ENCODE measurements at regions of chr2 and their contacts with region 1.

Region 1: DNA sequence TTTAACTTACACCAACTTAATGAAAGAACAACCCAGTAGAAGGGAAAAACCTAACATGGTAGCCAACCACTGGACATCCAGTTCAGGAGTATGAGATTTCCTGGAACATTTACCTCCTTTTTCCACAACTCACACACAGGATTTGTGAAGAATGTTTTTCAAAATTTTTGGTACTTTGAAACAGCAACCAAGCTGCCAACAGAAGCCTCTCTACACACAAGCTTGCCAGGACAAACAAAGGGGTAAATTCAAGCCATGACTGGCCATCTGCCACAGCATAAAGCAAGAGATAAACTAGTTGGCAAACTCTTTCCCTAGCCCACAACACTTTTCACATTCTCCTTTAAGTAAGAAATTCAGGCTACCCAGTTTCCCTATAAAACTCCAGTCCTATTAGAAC is 21.4 kb downstream of the MGAT4A start:
- DNase-seq: no peak
- ATAC-seq: no peak
- H3K4me3 ChIP-seq: no peak overlapping the region
- H3K4me3 Mint-ChIP-seq: peak overlapping the region; percentile 18 to 76 (median 58)
- H3K27ac ChIP-seq: peak overlapping the region; percentile 41
- H3K27ac Mint-ChIP-seq: peak overlapping the region; percentile 78 to 79
- H3K4me1 ChIP-seq: peaks cover 58 to 72% of the 10 kb centered on the region in 2 experiments
- H3K4me1 Mint-ChIP-seq: peaks cover 85 to 90% (median 89%) of the 10 kb centered on the region in 3 donors
- H3K27me3 ChIP-seq: no peaks in the 10 kb centered on the region
- H3K27me3 Mint-ChIP-seq: no peaks in the 10 kb centered on the region

Region 2: DNA sequence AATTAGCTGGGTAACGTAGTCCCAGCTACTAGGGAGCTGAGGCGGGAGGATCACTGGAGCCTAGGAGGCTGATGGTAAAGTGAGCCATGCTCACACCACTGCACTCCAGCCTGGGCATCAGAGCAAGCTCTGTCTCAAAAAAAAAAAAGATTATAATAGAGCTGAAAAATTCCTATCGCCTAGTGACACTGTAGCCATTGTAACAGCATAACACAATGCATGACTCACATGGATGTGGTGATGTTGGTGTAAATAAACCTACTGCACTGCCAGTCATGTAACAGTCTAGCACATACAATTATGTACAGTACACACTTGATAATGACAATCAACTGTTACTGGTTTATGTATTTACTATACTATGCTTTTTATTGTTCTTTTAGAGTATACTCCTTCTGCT is 18.2 kb before region 1 on chr2:
- CTCF ChIA-PET with region 1: interaction called, 4 read pairs
- POLR2A ChIA-PET with region 1: interaction called, 5 to 10 read pairs
- DNase-seq: peak in 1 of 35 experiments; percentile 33
- ATAC-seq: peak in 3 of 4 experiments; percentile 53 to 72 (median 59)
- H3K4me3 ChIP-seq: no peak overlapping the region
- H3K4me3 Mint-ChIP-seq: no peak overlapping the region
- H3K27ac ChIP-seq: no peak overlapping the region
- H3K27ac Mint-ChIP-seq: peak overlapping the region; percentile 64 to 90
- H3K4me1 ChIP-seq: peaks cover 26 to 54% of the 10 kb centered on the region in 2 experiments
- H3K4me1 Mint-ChIP-seq: peaks cover 90 to 95% (median 90%) of the 10 kb centered on the region in 3 donors
- H3K27me3 ChIP-seq: no peaks in the 10 kb centered on the region
- H3K27me3 Mint-ChIP-seq: no peaks in the 10 kb centered on the region

Region 3: GRCh38 chr2:98731041-98731893 is 21.7 kb after region 1 on chr2 and contains the start of gene MGAT4A:
- CTCF ChIA-PET with region 1: interaction called in 1 of 2 experiments, 8 read pairs
- POLR2A ChIA-PET with region 1: interaction called, 3 to 12 read pairs
- DNase-seq: peak; percentile 66 to 88 (median 78)
- ATAC-seq: peak; percentile 82 to 87 (median 84)
- H3K4me3 ChIP-seq: peak within 1 kb of the TSS; percentile 84 to 91
- H3K4me3 Mint-ChIP-seq: peak within 1 kb of the TSS; percentile 92 to 94 (median 93)
- H3K27ac ChIP-seq: peak within 1 kb of the TSS; percentile 59
- H3K27ac Mint-ChIP-seq: peak within 1 kb of the TSS; percentile 96 to 97
- H3K4me1 ChIP-seq: peaks cover 40 to 50% of the 10 kb centered on the region in 2 experiments
- H3K4me1 Mint-ChIP-seq: peaks cover 66 to 79% (median 68%) of the 10 kb centered on the region in 3 donors
- H3K27me3 ChIP-seq: no peaks in the 10 kb centered on the region
- H3K27me3 Mint-ChIP-seq: no peaks in the 10 kb centered on the region
- total RNA-seq, gene MGAT4A: 185 to 220 (median 199) TPM